Body of pancreas (tissue), 4 donors: ENCODE measurements at regions of chr19 and their contacts with region 1.

Region 1: GRCh38 chr19:8245869-8246835 is 37.0 kb downstream of the CERS4 start:
- DNase-seq: no peak
- ATAC-seq: no peak
- H3K4me3 ChIP-seq: no peak overlapping the region
- H3K27ac ChIP-seq: no peak overlapping the region
- H3K4me1 ChIP-seq: peaks cover 28% of the 10 kb centered on the region
- H3K27me3 ChIP-seq: no peaks in the 10 kb centered on the region
- CTCF ChIP-seq: no peak
- POLR2A ChIP-seq: no peak

Region 2: DNA sequence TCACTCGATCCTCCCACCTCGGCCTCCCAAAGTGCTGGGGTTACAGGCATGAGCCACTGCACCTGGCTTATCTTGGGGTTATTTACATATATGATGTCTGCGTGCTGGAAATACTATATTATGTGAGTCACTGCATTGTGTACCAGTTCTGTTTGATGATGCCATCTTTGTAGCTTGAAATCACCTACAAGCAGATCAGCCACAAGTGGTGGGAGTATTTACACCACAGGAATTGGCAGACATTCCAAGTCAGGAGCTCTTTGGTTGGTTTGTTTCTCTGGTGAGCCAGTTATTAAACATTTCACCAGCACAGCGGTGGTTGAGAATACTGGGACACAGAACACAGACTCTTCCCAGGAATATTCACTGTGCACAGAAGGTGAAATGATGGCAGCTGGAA is 298.2 kb before region 1 on chr19:
- intact Hi-C with region 1: loop called (anchors 5 kb)
- DNase-seq: no peak
- ATAC-seq: no peak
- H3K4me3 ChIP-seq: no peak overlapping the region
- H3K27ac ChIP-seq: no peak overlapping the region
- H3K4me1 ChIP-seq: peaks cover 5% of the 10 kb centered on the region
- H3K27me3 ChIP-seq: no peaks in the 10 kb centered on the region
- CTCF ChIP-seq: no peak
- POLR2A ChIP-seq: no peak